K562 (cell line): ENCODE measurements at regions of chr2 and their contacts with region 1.

Region 1: DNA sequence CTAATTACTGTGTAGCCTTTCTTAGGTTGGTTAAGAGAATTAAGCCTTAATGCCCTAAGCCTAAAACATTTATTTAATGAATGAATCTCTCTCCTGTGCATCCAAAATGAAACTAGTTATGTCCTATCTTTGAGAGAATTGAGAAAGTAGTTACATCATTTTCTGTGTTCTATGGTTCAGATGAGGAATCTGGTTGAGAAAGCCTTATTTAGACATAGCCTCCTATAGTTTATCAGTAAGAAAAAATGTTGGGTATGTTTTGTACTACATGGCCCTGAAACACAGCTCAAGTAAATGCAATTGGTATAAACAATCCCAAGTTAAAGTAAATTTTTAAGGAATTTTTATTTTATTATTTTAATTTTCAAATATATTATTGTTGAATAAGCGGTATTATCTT is 25.9 kb upstream of the RAMP1 start:
- DNase-seq: no peak
- ATAC-seq: no peak
- H3K4me3 ChIP-seq: no peak overlapping the region
- H3K27ac ChIP-seq: no peak overlapping the region
- H3K4me1 ChIP-seq: no peaks in the 10 kb centered on the region
- H3K27me3 ChIP-seq: peaks cover 2 to 6% of the 10 kb centered on the region in 2 experiments; a peak in 4 of 5 replicates
- CTCF ChIP-seq: no peak
- EP300 ChIP-seq: no peak
- POLR2A ChIP-seq: no peak
- RAD21 ChIP-seq: no peak

Region 2: GRCh38 chr2:237815637-237816036 is 17.9 kb before region 1 on chr2:
- CTCF ChIA-PET with region 1: no interaction called
- POLR2A ChIA-PET with region 1: interaction called, 3 read pairs
- in situ Hi-C with region 1: no loop called
- intact Hi-C with region 1: loop called (anchors 2 kb)
- DNase-seq: no peak
- ATAC-seq: no peak
- H3K4me3 ChIP-seq: no peak overlapping the region
- H3K27ac ChIP-seq: no peak overlapping the region
- H3K4me1 ChIP-seq: no peaks in the 10 kb centered on the region
- H3K27me3 ChIP-seq: no peaks in the 10 kb centered on the region; a peak in 2 of 5 replicates
- CTCF ChIP-seq: no peak
- EP300 ChIP-seq: no peak
- POLR2A ChIP-seq: no peak
- RAD21 ChIP-seq: no peak